IMR-90 (cell line): ENCODE measurements at regions of chr4 and their contacts with region 1.

Region 1: DNA sequence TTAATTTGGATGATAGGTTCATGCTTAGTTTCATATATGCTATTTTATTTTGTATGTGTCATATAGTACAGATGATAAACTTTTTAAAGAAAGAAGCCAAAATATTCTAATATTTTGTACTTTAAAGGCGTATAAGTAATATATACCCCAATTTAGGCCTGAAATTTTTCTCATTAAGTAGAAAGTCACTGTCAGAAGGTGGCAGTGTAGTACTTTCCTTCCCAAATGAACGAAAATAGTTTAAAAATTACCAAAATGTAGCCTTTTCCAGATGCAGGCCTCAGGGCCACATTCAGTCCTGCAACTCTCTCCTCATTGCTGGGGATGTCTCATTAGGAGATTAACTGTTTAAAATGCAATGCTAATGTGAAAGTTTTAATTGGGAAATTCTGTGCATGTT is 1263.6 kb downstream of the C4orf33 start:
- DNase-seq: peak; percentile 35
- ATAC-seq: peak; percentile 51
- H3K4me3 ChIP-seq: no peak overlapping the region
- H3K27ac ChIP-seq: no peak overlapping the region
- H3K4me1 ChIP-seq: no peaks in the 10 kb centered on the region
- H3K27me3 ChIP-seq: no peaks in the 10 kb centered on the region
- CTCF ChIP-seq: peak; percentile 78
- POLR2A ChIP-seq: no peak
- RAD21 ChIP-seq: peak; percentile 81

Region 2: GRCh38 chr4:130563185-130563888 is 203.8 kb after region 1 on chr4:
- CTCF ChIA-PET with region 1: no interaction called
- POLR2A ChIA-PET with region 1: no interaction called
- dilution Hi-C with region 1: no loop called
- in situ Hi-C with region 1: no loop called
- intact Hi-C with region 1: loop called (anchors 5 kb)
- DNase-seq: peak; percentile 72
- ATAC-seq: peak; percentile 95
- H3K4me3 ChIP-seq: peak overlapping the region; percentile 38
- H3K27ac ChIP-seq: no peak overlapping the region
- H3K4me1 ChIP-seq: no peaks in the 10 kb centered on the region
- H3K27me3 ChIP-seq: no peaks in the 10 kb centered on the region
- CTCF ChIP-seq: peak; percentile 67
- POLR2A ChIP-seq: no peak
- RAD21 ChIP-seq: peak; percentile 72

Region 3: DNA sequence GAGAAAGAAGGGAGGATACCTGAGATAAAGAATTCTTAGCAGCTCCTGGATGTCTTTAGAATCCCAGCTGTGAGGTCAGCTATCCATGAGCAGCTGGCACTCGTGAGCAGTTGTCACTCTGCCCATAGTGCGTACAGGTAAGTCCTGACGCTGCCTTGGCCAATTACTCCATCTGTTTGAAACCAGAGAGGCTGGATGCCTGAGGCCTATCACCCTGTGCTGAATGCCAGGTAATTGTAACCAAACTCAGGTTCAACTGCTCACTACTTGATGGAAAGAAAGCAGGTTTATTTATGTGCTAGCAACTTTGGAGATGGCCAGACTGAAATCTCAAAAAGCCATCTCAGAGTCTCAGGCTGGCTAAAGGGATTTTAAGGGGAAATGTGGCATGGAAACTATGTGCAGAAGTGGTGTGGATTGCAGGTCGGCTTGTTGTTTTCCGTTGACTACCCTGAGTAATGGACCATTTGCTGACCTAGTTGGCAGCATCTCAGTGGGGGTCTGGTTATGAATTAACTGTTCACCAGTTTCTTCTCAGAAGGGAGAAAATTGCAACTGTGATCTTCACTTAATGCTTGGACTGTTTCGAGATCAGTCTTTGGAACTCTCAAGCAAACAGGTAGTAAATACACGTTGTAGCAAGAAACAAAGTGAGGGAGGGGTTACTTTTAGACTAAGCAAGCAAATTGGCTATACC is 1175.5 kb after region 1 on chr4:
- CTCF ChIA-PET with region 1: interaction called, 4 read pairs
- POLR2A ChIA-PET with region 1: no interaction called
- dilution Hi-C with region 1: no loop called
- in situ Hi-C with region 1: no loop called
- intact Hi-C with region 1: loop called (anchors 10 kb)
- DNase-seq: no peak
- ATAC-seq: no peak
- H3K4me3 ChIP-seq: no peak overlapping the region
- H3K27ac ChIP-seq: no peak overlapping the region
- H3K4me1 ChIP-seq: no peaks in the 10 kb centered on the region
- H3K27me3 ChIP-seq: no peaks in the 10 kb centered on the region
- CTCF ChIP-seq: no peak
- POLR2A ChIP-seq: no peak
- RAD21 ChIP-seq: no peak

Region 4: GRCh38 chr4:131644619-131645018 is 1285.1 kb after region 1 on chr4:
- CTCF ChIA-PET with region 1: no interaction called
- POLR2A ChIA-PET with region 1: no interaction called
- dilution Hi-C with region 1: no loop called
- in situ Hi-C with region 1: no loop called
- intact Hi-C with region 1: loop called (anchors 5 kb)
- DNase-seq: peak; percentile 2
- ATAC-seq: peak; percentile 60; the same call in 1 of the 2 replicates
- H3K4me3 ChIP-seq: no peak overlapping the region
- H3K27ac ChIP-seq: no peak overlapping the region
- H3K4me1 ChIP-seq: no peaks in the 10 kb centered on the region
- H3K27me3 ChIP-seq: no peaks in the 10 kb centered on the region
- CTCF ChIP-seq: peak; percentile 37
- POLR2A ChIP-seq: no peak
- RAD21 ChIP-seq: peak; percentile 44